Pancreas (tissue), 10 donors: ENCODE measurements at regions of chr6 and their contacts with region 1.

Region 1: GRCh38 chr6:136792410-136793262 is at the start of gene MAP3K5:
- DNase-seq: peak; percentile 88 to 96 (median 94)
- ATAC-seq: peak; percentile 81 to 90 (median 86)
- H3K4me3 ChIP-seq: peak within 1 kb of the TSS; percentile 62 to 91 (median 86)
- H3K27ac ChIP-seq: peak within 1 kb of the TSS; percentile 95 to 99 (median 98)
- H3K4me1 ChIP-seq: peaks cover 0 to 12% (median 6%) of the 10 kb centered on the region in 3 donors
- H3K27me3 ChIP-seq: no peaks in the 10 kb centered on the region
- CTCF ChIP-seq: peak; percentile 39 to 76 (median 44)
- total RNA-seq, gene MAP3K5: 15.7 to 28.6 (median 20.0) TPM

Region 2: GRCh38 chr6:136466777-136467176 is 325.9 kb before region 1 on chr6:
- intact Hi-C with region 1: no loop called
- DNase-seq: no peak
- ATAC-seq: peak in 2 of 4 donors; percentile 48 to 60
- H3K4me3 ChIP-seq: no peak overlapping the region
- H3K27ac ChIP-seq: no peak overlapping the region
- H3K4me1 ChIP-seq: peaks cover 2 to 11% (median 10%) of the 10 kb centered on the region in 3 donors
- H3K27me3 ChIP-seq: no peaks in the 10 kb centered on the region
- CTCF ChIP-seq: no peak

Region 3: DNA sequence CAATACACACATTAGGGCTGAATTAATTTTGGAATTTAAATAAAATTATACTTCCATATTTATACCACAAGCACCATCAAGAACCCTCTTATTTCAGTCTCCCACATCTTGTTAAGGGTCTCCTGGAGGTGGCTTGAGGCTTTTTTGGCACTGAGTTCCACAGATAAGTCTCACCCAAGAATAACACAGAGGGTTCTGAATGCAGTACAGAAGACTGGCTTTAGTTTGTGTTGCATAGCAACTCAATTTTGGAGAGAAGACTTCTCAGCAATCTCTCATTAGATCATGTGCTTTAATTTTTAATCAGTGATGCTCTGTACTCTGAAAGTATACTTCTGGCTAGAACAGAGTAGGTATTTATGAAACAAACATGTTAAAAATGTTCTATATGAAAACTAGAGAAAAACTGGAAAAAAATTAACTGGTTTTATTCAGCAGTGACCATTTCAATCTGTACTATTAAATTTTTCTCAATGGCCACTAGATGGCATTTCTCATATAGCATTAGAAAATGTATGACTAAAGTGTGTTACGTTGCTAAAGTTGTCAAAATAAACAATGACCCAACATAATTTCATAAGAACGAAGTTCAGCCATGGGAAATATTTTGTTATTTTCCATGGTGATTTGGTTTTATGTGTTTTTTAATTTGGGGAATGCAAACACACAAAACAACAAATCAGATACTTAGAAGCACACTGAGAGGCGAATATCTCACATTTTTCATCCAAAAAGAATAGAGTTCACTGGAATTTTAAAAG is 209.7 kb before region 1 on chr6:
- intact Hi-C with region 1: loop called in 1 of 3 experiments (anchors 10 kb)
- DNase-seq: no peak
- ATAC-seq: peak; percentile 69 to 86 (median 83)
- H3K4me3 ChIP-seq: no peak overlapping the region
- H3K27ac ChIP-seq: peak overlapping the region in 1 of 4 donors; percentile 38
- H3K4me1 ChIP-seq: no peaks in the 10 kb centered on the region
- H3K27me3 ChIP-seq: no peaks in the 10 kb centered on the region
- CTCF ChIP-seq: peak; percentile 10 to 36 (median 24)

Region 4: DNA sequence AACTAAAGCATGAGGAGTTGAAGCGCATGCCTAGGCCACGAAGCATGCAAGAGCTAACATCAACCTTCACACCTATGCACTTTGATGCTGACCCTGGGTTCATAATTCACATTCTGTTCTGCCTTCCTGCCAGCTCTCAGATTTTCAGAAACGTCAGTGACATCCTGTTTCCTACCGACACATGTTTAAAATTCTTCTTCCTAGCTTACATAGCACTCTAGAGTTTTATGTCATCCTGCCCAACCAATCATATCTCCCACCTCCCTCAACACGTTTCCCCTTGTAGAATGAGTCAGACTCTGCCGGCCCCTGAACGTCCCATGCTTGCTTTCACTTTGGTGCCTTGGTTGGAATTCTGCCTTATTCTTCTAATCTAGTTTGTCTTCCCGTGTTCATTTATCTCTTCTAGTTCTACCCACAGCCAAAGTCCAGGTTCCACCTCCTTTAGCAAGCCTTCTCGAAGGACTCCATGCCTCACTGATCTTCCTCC is 145.2 kb before region 1 on chr6:
- intact Hi-C with region 1: loop called in 2 of 3 experiments (anchors 5 kb)
- DNase-seq: peak in 2 of 6 donors; percentile 25 to 37
- ATAC-seq: peak; percentile 35 to 59 (median 48)
- H3K4me3 ChIP-seq: no peak overlapping the region
- H3K27ac ChIP-seq: peak overlapping the region in 2 of 4 donors; percentile 37 to 66
- H3K4me1 ChIP-seq: peaks cover 0 to 39% (median 17%) of the 10 kb centered on the region in 3 donors
- H3K27me3 ChIP-seq: no peaks in the 10 kb centered on the region
- CTCF ChIP-seq: no peak

Region 5: DNA sequence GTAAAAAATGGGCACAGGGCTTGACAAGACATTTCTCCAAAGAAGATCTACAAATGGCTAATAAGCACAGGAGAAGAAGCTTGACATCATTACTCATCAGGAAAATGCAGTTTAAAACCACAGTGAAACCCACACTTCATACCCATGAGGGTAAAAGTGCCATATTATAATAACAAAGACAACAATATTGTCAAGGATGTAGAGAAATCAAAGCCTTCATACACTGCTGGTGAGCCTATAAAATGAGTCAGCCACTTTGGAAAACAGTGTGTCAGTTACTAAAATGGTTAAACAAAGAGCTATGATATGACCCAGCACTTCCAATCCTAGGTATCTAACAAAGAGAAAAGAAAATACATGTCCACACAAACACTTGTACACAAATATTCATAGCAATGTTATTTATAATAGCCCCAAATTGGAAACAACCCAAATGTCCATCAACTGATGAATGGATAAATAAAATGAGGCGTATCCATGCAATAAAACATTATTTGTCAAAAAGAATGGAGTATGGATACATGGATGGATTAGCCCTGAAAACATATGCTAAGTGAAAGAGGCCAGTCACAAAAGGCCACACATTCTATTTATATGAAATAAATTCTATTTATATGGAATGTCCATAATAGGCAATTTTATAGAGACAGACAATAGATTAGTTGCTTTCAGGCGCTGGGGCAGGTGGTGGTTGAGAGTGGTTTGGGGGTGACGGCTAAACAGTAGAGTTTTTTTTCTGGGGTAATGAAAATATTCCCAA is 263.7 kb after region 1 on chr6:
- intact Hi-C with region 1: no loop called
- DNase-seq: no peak
- ATAC-seq: no peak
- H3K4me3 ChIP-seq: no peak overlapping the region
- H3K27ac ChIP-seq: no peak overlapping the region
- H3K4me1 ChIP-seq: no peaks in the 10 kb centered on the region
- H3K27me3 ChIP-seq: no peaks in the 10 kb centered on the region
- CTCF ChIP-seq: no peak

Region 6: DNA sequence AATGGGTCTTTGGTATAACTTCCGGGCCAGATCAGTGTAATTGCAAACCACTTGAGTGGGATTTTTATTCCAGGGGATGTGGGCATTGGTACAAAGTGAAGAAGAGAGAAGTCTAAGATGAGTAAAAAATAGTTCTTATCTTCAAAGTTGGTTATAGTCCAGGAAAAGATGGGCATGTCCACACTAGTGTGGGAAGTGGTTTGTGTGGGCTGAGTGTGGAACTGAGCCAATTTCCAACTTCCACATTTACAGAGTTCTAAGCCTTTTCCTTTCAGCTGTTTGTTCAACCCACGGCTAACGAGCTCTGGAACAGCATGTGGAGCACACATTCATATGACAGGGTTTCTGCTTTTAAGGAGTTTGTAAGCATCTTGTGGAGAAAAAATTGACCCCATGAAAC is 498.8 kb after region 1 on chr6:
- intact Hi-C with region 1: no loop called
- DNase-seq: peak in 1 of 6 donors; percentile 44
- ATAC-seq: peak in 2 of 4 donors; percentile 80 to 83
- H3K4me3 ChIP-seq: no peak overlapping the region
- H3K27ac ChIP-seq: no peak overlapping the region
- H3K4me1 ChIP-seq: peaks cover 0 to 7% (median 5%) of the 10 kb centered on the region in 3 donors
- H3K27me3 ChIP-seq: no peaks in the 10 kb centered on the region
- CTCF ChIP-seq: no peak